Tibial artery (tissue), 4 donors: ENCODE measurements at regions of chr14 and their contacts with region 1.

Region 1: GRCh38 chr14:57268161-57269069 is at the starts of genes AP5M1 and EXOC5:
- DNase-seq: peak; percentile 93 to 95
- H3K4me3 ChIP-seq: peak within 1 kb of the TSS; percentile 90 to 99
- H3K27ac ChIP-seq: peak within 1 kb of the TSS; percentile 97 to 98
- H3K4me1 ChIP-seq: peaks cover 0 to 47% (median 17%) of the 10 kb centered on the region in 4 donors
- H3K27me3 ChIP-seq: no peaks in the 10 kb centered on the region
- CTCF ChIP-seq: no peak

Region 2: GRCh38 chr14:57390028-57390805 is 121.8 kb after region 1 on chr14 and contains the start of gene NAA30:
- intact Hi-C with region 1: loop called (anchors 10 kb)
- DNase-seq: peak; percentile 94 to 95
- H3K4me3 ChIP-seq: peak within 1 kb of the TSS; percentile 85 to 89
- H3K27ac ChIP-seq: peak within 1 kb of the TSS; percentile 90 to 94
- H3K4me1 ChIP-seq: peaks cover 0 to 36% (median 10%) of the 10 kb centered on the region in 4 donors
- H3K27me3 ChIP-seq: no peaks in the 10 kb centered on the region
- CTCF ChIP-seq: no peak

Region 3: GRCh38 chr14:57640036-57640435 is 371.6 kb after region 1 on chr14:
- intact Hi-C with region 1: no loop called
- DNase-seq: no peak
- H3K4me3 ChIP-seq: no peak overlapping the region
- H3K27ac ChIP-seq: no peak overlapping the region
- H3K4me1 ChIP-seq: no peaks in the 10 kb centered on the region
- H3K27me3 ChIP-seq: no peaks in the 10 kb centered on the region
- CTCF ChIP-seq: no peak

Region 4: DNA sequence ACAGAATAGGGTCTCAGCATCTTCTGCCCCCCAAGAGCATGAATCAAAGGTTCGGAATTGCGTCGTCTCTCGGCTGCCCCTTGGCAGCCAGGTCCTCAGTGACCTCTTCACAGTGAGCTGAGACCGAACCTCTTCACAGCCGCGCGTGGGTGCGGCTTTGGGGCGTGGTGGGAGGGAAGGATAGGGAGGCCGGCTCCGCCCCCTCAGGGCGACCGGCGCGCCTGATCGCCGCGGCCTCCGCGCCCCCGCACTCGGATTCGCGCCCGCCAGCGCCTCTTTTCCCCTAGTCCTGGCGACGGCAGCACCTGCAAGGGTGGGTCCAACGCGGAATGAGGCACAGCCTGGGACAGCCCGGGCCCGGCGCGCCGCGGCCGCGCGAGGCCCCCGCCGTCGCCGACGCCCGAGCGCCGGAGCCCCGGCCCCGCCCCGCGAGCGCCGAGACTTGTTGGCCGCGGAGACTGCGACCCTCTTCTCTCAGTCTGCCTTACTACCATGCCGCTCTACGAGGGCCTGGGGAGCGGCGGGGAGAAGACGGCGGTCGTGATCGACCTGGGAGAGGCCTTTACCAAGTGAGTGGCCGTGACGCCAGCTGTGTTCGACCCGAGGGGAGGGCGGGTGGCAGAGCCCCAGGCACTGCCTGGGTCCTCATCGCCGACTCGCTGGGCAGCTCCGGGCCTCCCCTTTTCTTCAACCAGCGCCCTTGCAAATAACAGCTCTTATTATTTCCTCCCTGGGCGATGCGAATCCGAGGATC is 931.5 kb after region 1 on chr14 and contains the start of gene ACTR10:
- intact Hi-C with region 1: loop called (anchors 10 kb)
- DNase-seq: peak; percentile 81 to 90
- H3K4me3 ChIP-seq: peak within 1 kb of the TSS; percentile 79 to 86
- H3K27ac ChIP-seq: peak within 1 kb of the TSS; percentile 88 to 93
- H3K4me1 ChIP-seq: peaks cover 0 to 29% (median 13%) of the 10 kb centered on the region in 4 donors
- H3K27me3 ChIP-seq: no peaks in the 10 kb centered on the region
- CTCF ChIP-seq: no peak